Activated naive CD8-positive, alpha-beta T cell treated with anti-CD3 and anti-CD28 coated beads, Interleukin-2, amount 10 ng/mL, durations not matched to agents 7 days and 5 days (primary cell): ENCODE measurements at regions of chr12 and their contacts with region 1.

Region 1: GRCh38 chr12:42237052-42237852 is 796 bp downstream of the YAF2 start:
- DNase-seq: peak; percentile 78
- ATAC-seq: peak; percentile 84
- H3K4me3 Mint-ChIP-seq: peak overlapping the region; percentile 93
- H3K27ac Mint-ChIP-seq: peak overlapping the region; percentile 88
- H3K4me1 Mint-ChIP-seq: peaks cover 26% of the 10 kb centered on the region
- H3K27me3 Mint-ChIP-seq: no peaks in the 10 kb centered on the region

Region 2: DNA sequence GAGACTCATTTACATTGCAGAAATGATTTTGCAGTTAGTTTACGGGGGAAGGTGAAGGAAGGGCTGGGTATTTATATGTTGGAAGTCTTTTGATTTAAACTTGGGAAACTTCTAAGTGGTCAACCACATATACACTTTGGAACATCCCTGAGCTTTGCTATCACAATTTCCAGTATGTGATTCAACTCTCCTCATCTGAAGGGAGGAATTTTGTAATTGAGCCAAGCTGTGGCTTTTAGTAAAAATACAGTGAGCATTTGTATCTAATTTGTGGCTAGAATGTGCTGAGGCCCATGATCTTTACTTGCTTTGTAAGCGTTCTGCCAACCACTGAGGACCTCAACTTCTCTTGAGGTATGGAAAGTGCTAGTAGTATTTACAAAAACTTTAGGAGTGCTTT is 1284.2 kb before region 1 on chr12:
- POLR2A ChIA-PET with region 1: no interaction called
- DNase-seq: no peak
- ATAC-seq: no peak
- H3K4me3 Mint-ChIP-seq: no peak overlapping the region
- H3K27ac Mint-ChIP-seq: no peak overlapping the region
- H3K4me1 Mint-ChIP-seq: no peaks in the 10 kb centered on the region
- H3K27me3 Mint-ChIP-seq: no peaks in the 10 kb centered on the region

Region 3: DNA sequence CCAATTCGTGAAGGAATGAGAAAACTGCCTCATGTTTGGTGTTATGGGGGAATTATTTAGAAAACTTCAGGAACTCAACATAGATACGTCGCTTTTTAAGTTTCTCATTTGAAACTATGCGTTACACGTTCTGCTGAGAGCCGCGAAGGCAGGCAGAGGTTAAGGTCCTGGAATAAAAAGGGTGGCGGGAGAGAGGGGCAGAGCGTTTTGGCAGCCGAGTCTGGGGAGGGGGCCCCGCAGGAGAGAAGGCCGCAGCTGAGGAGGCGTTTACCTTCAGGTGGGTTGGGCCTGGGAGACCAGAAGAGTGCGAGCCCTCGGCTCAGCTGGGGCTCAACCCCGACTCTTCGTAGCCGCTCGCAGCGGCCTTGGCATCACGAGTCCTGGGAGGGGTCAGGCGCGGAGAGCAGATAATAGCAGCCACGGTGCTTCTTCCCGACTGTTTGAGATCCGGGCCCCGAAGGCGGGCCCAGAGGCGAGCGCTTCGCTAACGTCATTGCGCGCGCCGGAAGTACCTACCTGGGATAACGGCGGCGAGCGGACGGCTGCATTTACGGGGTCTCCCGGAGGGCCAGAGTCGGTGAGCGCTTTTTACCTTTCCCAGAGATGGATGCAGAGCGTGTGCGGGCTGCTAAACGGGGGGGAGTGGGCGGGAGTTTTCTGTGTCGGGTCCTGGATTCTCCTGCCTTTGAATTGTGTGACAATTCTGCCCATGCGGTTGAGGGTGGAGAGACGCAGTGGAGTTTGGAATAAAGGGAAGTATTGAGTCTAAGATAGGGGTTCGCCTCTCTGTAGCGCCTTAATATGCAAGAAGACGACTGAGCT is 88.6 kb after region 1 on chr12 and contains the starts of genes PPHLN1 and ZCRB1:
- POLR2A ChIA-PET with region 1: interaction called, 17 read pairs
- DNase-seq: peak; percentile 82
- ATAC-seq: peak; percentile 95
- H3K4me3 Mint-ChIP-seq: peak within 1 kb of the TSS; percentile 96
- H3K27ac Mint-ChIP-seq: peak within 1 kb of the TSS; percentile 96
- H3K4me1 Mint-ChIP-seq: peaks cover 29% of the 10 kb centered on the region
- H3K27me3 Mint-ChIP-seq: no peaks in the 10 kb centered on the region
- total RNA-seq, gene PPHLN1: 86.3 to 91.4 TPM
- total RNA-seq, gene ZCRB1: 47.8 to 53.8 TPM

Region 4: DNA sequence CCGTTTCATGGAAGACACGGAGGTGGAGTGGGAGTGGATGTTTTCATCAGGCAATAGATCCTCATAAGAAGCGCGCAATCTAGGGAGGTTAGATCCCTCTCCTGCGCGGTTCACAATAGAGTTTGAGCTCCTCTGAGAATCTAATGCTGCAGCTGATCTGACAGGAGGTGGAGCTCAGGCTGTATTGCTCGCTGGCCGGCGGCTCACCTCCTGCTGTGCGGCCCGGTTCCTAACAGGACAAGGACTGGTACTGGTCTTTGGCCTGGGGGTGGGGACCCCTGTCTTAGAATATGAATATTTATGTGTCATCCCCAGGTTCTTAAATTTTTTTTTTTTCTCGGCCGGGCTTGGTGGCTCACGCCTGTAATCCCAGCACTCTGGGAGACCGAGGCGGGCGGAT is 315.6 kb after region 1 on chr12:
- POLR2A ChIA-PET with region 1: no interaction called
- DNase-seq: no peak
- ATAC-seq: no peak
- H3K4me3 Mint-ChIP-seq: no peak overlapping the region
- H3K27ac Mint-ChIP-seq: no peak overlapping the region
- H3K4me1 Mint-ChIP-seq: no peaks in the 10 kb centered on the region
- H3K27me3 Mint-ChIP-seq: peaks cover 16% of the 10 kb centered on the region